ENCODE measurements at regions of chr2 and their contacts with region 1.

Region 1: GRCh38 chr2:108719149-108720044 is at the start of gene RANBP2:
- DNase-seq: peak; percentile 95 to 98 (median 97)
- ATAC-seq: peak; percentile 96 to 100 (median 100)
- H3K4me3 ChIP-seq: peak within 1 kb of the TSS; percentile 60 to 100 (median 90)
- H3K27ac ChIP-seq: peak within 1 kb of the TSS; percentile 89 to 100 (median 95)
- H3K4me1 ChIP-seq: peaks cover 0 to 33% (median 12%) of the 10 kb centered on the region in 12 donors
- H3K27me3 ChIP-seq: no peaks in the 10 kb centered on the region
- CTCF ChIP-seq: no peak
- POLR2A ChIP-seq: peak; percentile 37 to 94
- total RNA-seq, gene RANBP2: 43.3 to 67.7 (median 52.5) TPM

Region 2: DNA sequence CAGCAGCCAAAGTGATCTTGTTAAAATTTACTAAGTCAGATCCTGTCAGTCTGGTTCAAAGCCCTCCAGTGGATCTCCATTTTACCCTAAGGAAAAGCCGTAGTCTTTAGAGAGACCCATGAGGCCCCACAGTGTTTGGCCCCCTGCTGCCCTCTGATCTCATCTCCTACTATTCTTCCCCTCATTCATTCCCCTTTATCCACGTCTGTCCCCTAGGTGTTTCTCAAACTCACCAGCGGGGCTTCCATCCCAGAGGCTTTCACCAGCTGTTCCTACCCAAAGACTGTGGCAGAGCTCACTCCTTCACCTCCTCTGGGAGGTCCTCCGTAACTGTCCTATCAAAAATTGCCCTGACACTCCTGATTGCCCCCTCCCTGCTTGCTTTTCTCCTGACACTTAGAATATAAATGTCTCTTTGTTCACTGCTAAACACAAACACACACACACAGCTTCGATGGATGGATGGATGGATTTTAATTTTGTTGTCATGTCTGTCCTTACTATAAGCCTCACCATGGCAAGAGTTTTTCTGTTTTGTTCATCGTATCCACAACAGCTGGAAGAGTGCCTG is 159.1 kb before region 1 on chr2:
- intact Hi-C with region 1: no loop called
- DNase-seq: no peak
- ATAC-seq: peak in 1 of 4 donors; percentile 7
- H3K4me3 ChIP-seq: no peak overlapping the region
- H3K27ac ChIP-seq: peak overlapping the region in 7 of 12 donors; percentile 0 to 56 (median 21)
- H3K4me1 ChIP-seq: peaks cover 0 to 53% (median 29%) of the 10 kb centered on the region in 12 donors
- H3K27me3 ChIP-seq: no peaks in the 10 kb centered on the region
- CTCF ChIP-seq: no peak
- POLR2A ChIP-seq: no peak

Region 3: DNA sequence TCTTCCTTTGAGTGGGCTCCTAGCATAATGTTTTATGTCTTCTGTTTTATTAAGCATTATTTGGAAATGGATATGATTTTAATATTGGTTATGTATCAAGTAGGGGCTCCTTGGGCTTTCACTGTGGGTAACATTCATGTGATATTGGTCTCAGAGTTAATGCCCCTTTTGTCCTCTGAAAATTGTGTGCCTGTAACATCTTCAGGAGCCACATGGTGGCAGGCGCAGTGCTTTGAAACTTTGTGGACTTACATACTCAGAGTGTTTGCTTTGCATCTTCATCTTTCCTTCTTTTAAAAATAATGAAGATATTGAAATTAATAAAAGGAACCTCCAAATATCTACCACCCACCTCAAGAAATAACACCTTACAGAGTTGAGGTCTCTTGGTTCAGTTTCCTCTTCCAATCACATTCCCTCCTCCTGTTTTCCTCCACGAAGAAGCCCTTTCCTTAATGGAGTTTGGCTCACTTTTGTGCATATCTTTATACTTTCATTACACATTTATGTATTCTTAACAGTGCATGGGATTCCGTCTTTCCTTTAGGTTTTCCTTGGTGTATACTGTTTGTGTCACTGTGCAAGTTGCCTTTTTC is 111.6 kb before region 1 on chr2:
- intact Hi-C with region 1: loop called in 1 of 10 experiments (anchors 10 kb)
- DNase-seq: peak in 1 of 5 donors; percentile 45
- ATAC-seq: peak in 3 of 4 donors; percentile 47 to 63 (median 61)
- H3K4me3 ChIP-seq: no peak overlapping the region
- H3K27ac ChIP-seq: peak overlapping the region in 8 of 12 donors; percentile 0 to 62 (median 25)
- H3K4me1 ChIP-seq: peaks cover 0 to 30% (median 14%) of the 10 kb centered on the region in 12 donors
- H3K27me3 ChIP-seq: no peaks in the 10 kb centered on the region
- CTCF ChIP-seq: peak; percentile 33 to 70 (median 61)
- POLR2A ChIP-seq: no peak

Measured in heart left ventricle (tissue), 16 donors.